ENCODE measurements at regions of chr3 and their contacts with region 1.

Region 1: DNA sequence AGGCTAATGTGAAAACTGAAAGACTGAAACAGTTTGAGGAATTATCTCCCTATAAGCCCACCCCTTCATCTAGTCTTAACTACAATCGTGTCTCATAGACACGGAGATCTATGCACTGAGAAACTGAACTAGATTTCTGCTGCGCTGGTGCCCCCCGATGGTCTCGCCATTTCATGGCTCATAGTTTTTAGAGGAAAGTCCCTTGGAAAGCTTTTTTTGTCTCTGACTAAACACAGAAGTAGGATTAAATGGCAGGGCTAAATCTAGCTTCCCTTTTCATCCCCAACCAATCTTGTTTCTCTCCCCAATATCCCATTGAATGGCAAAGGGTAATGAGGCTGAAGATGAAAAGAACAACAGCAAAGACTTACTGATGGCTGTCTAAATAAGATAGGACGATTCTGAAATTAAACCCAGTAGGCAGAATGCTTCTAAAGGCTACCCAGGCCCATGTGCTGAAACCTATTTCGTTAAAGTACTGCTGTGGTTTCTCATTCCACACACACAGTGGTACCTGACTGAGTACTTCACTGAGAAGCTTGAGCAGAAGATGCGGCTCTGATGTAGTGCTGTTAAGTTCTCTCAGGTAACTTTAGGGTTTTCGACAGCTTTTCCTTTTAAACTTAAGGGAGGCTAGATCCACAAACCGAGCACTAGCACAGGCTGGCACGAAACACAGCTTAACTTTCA is 142.7 kb downstream of the GADL1 start:
- DNase-seq: no peak

Region 2: DNA sequence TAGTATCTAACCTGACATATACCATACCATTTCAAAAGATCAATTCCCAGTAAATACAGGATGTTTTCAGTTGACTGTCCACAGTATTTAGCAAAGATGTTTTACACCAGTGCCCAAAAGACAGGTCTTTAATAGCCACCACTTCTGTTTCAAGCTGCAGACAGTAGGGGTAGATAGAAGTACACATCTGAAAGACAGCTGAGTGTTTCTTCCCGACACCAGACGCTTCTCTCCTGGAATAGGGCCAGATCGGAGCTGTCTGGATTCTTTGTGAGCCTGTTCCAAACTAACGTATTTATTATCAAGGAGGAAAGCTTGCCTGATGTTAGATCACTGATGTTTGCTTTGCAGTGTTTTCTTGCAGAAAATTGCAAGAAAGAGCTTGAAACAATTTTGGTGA is 1606.9 kb before region 1 on chr3:
- intact Hi-C with region 1: loop called (anchors 5 kb)
- DNase-seq: no peak

Region 3: DNA sequence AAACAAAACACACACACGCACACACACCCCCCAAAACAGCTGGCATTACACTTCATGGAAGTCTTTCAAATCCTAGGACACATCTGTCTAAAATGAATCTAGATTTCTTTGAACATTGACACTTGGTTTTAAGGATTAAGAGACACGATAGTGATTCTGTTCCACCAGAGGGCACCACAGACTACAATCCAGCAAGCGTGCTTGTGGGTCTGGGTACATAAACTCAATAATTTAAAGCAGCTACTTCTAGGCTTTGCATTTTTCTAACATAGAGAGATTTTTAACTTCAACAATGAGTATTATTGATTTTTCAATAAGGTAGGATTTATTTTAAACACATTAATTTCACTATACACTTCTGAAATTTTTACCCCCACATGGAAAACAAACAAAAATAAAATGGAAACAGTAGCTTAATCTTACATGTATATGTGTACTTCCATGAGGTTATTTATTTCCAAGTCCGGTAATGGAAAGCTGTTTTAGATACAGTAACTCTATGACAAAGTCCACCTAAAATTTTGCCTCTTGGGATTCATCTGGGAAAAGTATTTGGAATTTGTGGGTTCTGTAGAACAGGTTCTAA is 709.4 kb before region 1 on chr3:
- intact Hi-C with region 1: loop called (anchors 5 kb)
- DNase-seq: no peak

Region 4: DNA sequence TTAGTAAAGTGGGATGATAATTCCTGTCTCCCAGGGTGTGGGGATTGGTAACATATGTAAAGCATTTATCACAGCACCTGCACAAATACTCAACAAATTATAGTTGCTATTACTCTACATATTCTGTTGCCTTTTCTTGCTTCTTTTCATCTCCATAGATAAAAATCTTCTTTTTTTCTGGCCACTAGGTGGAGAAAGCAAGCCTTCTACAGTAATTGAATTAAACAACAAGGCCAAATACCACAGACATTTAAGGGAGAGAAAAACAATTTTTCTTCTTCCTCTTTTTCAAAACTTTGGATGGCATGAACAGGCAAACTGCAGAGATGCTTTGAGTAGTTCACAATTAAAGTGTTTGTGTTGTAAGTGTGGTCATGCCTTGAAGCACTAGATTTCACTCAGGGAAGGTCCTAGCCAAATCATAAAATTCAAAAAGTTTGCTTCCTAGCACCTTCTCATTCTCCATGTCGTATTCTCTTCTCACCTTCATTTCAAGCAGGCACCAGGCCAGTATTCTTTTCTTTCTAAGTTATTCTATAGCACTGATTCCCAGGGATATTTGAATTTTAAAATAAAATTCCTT is 638.8 kb before region 1 on chr3:
- intact Hi-C with region 1: loop called (anchors 5 kb)
- DNase-seq: no peak